MCF 10A (cell line): ENCODE measurements at regions of chr13 and their contacts with region 1.

Region 1: GRCh38 chr13:31012655-31013024 is 80.2 kb downstream of the TEX26 start:
- DNase-seq: peak; percentile 50
- H3K4me3 Mint-ChIP-seq: no peak overlapping the region
- H3K27ac Mint-ChIP-seq: no peak overlapping the region
- H3K4me1 Mint-ChIP-seq: peaks cover 5% of the 10 kb centered on the region
- H3K27me3 Mint-ChIP-seq: no peaks in the 10 kb centered on the region
- CTCF ChIP-seq: peak; percentile 35

Region 2: GRCh38 chr13:30673669-30674521 is 338.7 kb before region 1 on chr13:
- CTCF ChIA-PET with region 1: no interaction called
- POLR2A ChIA-PET with region 1: no interaction called
- intact Hi-C with region 1: loop called (anchors 10 kb)
- DNase-seq: peak; percentile 83
- H3K4me3 Mint-ChIP-seq: peak overlapping the region; percentile 75
- H3K27ac Mint-ChIP-seq: peak overlapping the region; percentile 16
- H3K4me1 Mint-ChIP-seq: no peaks in the 10 kb centered on the region
- H3K27me3 Mint-ChIP-seq: no peaks in the 10 kb centered on the region
- CTCF ChIP-seq: peak; percentile 54